Heart left ventricle (tissue), 16 donors: ENCODE measurements at regions of chr6 and their contacts with region 1.

Region 1: DNA sequence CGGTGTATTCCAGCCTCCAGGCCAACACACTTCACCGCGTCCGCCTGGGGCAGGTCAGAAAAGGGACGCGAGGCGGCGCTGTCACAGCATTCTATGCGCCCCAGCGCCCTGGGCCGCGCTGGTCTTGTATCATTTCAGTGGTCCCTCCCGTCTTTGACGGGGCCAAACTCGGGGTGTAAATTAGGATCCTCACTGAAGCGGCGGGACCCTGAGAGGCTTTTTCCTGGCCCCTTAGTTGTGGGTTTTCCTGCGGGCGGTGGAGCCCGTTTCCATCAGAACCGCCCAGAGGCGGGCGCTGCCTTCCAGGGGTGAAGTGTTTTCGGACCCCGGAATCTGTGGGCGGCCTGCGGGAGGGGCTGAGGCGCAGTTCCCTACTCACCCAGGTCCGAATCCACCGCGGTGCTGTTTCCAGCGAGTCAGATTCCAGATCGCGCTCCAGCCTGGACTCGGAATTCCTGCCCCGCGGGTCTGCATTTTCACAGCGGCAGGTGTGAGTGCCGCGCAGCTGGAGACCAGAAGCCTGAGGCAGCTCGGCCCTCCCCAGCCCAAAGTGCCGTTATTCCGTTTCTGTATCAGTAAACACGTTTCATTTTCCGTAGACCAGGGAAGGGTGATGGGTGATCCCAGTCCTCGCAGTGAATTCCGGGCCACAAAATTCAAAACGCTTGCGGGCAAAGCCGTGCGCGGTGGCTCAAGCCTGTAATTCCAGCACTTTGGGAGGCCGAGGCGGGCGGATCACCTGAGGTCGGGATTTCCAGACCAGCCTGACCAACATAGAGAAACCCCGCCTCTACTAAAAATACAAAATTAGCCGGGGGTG is 3.9 kb upstream of the MICB start:
- DNase-seq: peak; percentile 80 to 91 (median 83)
- ATAC-seq: peak; percentile 82 to 91 (median 86)
- H3K4me3 ChIP-seq: peak overlapping the region; percentile 36 to 86 (median 68)
- H3K27ac ChIP-seq: peak overlapping the region; percentile 47 to 84 (median 70)
- H3K4me1 ChIP-seq: peaks cover 0 to 45% (median 12%) of the 10 kb centered on the region in 12 donors
- H3K27me3 ChIP-seq: peaks cover 0 to 10% (median 0%) of the 10 kb centered on the region in 9 donors
- CTCF ChIP-seq: peak; percentile 70 to 94 (median 80)
- POLR2A ChIP-seq: no peak

Region 2: GRCh38 chr6:31470801-31471200 is 23.3 kb before region 1 on chr6:
- intact Hi-C with region 1: loop called in 1 of 10 experiments (anchors 2 kb)
- DNase-seq: no peak
- ATAC-seq: no peak
- H3K4me3 ChIP-seq: no peak overlapping the region
- H3K27ac ChIP-seq: no peak overlapping the region
- H3K4me1 ChIP-seq: peaks cover 0 to 56% (median 4%) of the 10 kb centered on the region in 12 donors
- H3K27me3 ChIP-seq: no peaks in the 10 kb centered on the region
- CTCF ChIP-seq: no peak
- POLR2A ChIP-seq: no peak

Region 3: DNA sequence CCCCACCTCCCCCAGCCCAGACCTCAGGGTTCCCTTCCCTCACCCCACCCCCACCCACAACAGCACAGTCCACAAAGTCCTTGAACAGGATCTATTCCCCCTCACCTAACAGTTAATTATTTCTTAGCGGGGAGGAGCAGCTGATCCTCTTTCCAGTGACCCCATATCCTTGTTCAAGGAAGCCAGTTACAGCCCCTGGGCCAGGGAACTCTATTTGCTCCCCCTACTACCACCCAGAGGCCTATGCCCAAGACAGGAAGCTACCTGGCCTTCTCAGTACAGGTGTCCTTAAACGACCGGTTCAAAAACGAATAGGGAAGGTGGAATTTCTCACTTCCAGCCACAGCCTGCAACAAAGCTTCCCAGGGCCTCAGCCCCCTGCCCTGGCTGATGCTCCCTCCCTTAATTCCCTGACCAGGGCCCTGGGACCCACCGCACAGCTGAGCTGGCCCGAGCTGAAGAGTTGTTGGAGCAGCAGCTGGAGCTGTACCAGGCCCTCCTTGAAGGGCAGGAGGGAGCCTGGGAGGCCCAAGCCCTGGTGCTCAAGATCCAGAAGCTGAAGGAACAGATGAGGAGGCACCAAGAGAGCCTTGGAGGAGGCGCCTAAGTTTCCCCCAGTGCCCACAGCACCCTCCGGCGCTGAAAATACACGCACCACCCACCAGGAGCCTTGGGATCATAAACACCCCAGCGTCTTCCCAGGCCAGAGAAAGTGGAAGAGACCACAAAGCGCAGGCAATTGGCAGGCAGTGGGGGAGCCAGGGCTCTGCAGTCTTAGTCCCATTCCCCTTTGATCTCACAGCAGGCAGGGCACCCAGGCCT is 35.5 kb after region 1 on chr6:
- intact Hi-C with region 1: loop called in 1 of 10 experiments (anchors 5 kb)
- DNase-seq: no peak
- ATAC-seq: peak in 2 of 4 donors; percentile 3
- H3K4me3 ChIP-seq: no peak overlapping the region
- H3K27ac ChIP-seq: peak overlapping the region in 1 of 12 donors; percentile 2
- H3K4me1 ChIP-seq: peaks cover 0 to 8% (median 0%) of the 10 kb centered on the region in 12 donors
- H3K27me3 ChIP-seq: no peaks in the 10 kb centered on the region
- CTCF ChIP-seq: no peak
- POLR2A ChIP-seq: no peak

Region 4: GRCh38 chr6:31541658-31542521 is 47.8 kb after region 1 on chr6 and contains the start of gene DDX39B:
- intact Hi-C with region 1: loop called in 8 of 10 experiments (anchors 2 to 5 kb)
- DNase-seq: peak; percentile 96 to 97 (median 97)
- ATAC-seq: peak; percentile 92 to 95 (median 94)
- H3K4me3 ChIP-seq: peak within 1 kb of the TSS; percentile 48 to 95 (median 79)
- H3K27ac ChIP-seq: peak within 1 kb of the TSS; percentile 90 to 99 (median 95)
- H3K4me1 ChIP-seq: peaks cover 3 to 52% (median 35%) of the 10 kb centered on the region in 12 donors
- H3K27me3 ChIP-seq: no peaks in the 10 kb centered on the region
- CTCF ChIP-seq: no peak
- POLR2A ChIP-seq: peak in 1 of 2 donors; percentile 63
- total RNA-seq, gene DDX39B: 122 to 209 (median 164) TPM

Region 5: DNA sequence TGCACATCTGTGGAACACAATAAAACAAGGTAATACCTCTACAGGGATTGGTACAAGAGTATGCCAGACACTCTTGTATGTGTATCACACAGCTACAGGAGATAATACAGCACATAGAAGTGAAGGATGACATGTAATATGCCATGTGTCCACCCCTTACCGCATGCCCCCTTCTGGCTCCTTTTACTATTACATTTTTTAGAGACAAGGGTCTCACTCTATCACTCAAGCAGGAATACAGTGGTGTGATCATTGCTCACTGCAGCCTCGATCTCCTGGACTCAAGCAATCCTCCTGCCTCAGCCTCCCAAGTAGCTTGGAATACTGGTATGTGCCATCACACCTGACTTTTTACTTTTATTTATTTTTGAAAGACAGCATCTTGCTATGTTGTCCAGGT is 102.9 kb after region 1 on chr6:
- intact Hi-C with region 1: loop called in 9 of 10 experiments (anchors 1 to 10 kb)
- DNase-seq: no peak
- ATAC-seq: peak in 3 of 4 donors; percentile 53 to 63 (median 57)
- H3K4me3 ChIP-seq: no peak overlapping the region
- H3K27ac ChIP-seq: no peak overlapping the region
- H3K4me1 ChIP-seq: peaks cover 0 to 13% (median 0%) of the 10 kb centered on the region in 12 donors
- H3K27me3 ChIP-seq: no peaks in the 10 kb centered on the region
- CTCF ChIP-seq: peak in 11 of 12 donors; percentile 15 to 50 (median 45)
- POLR2A ChIP-seq: no peak

Region 6: GRCh38 chr6:31609519-31610406 is 115.7 kb after region 1 on chr6:
- intact Hi-C with region 1: loop called in 1 of 10 experiments (anchors 10 kb)
- DNase-seq: no peak
- ATAC-seq: no peak
- H3K4me3 ChIP-seq: no peak overlapping the region
- H3K27ac ChIP-seq: no peak overlapping the region
- H3K4me1 ChIP-seq: peaks cover 0 to 18% (median 0%) of the 10 kb centered on the region in 12 donors
- H3K27me3 ChIP-seq: no peaks in the 10 kb centered on the region
- CTCF ChIP-seq: no peak
- POLR2A ChIP-seq: no peak